ENCODE measurements at regions of chr3 and their contacts with region 1.

Region 1: GRCh38 chr3:44036850-44037249 is 204.8 kb upstream of the TOPAZ1 start:
- DNase-seq: peak in 5 of 10 donors; percentile 44 to 71 (median 66)
- H3K4me3 ChIP-seq: no peak overlapping the region
- H3K27ac ChIP-seq: peak overlapping the region in 2 of 59 donors; percentile 45 to 55
- H3K27me3 ChIP-seq: peaks cover 0 to 12% (median 0%) of the 10 kb centered on the region in 45 donors
- CTCF ChIP-seq: no peak

Region 2: DNA sequence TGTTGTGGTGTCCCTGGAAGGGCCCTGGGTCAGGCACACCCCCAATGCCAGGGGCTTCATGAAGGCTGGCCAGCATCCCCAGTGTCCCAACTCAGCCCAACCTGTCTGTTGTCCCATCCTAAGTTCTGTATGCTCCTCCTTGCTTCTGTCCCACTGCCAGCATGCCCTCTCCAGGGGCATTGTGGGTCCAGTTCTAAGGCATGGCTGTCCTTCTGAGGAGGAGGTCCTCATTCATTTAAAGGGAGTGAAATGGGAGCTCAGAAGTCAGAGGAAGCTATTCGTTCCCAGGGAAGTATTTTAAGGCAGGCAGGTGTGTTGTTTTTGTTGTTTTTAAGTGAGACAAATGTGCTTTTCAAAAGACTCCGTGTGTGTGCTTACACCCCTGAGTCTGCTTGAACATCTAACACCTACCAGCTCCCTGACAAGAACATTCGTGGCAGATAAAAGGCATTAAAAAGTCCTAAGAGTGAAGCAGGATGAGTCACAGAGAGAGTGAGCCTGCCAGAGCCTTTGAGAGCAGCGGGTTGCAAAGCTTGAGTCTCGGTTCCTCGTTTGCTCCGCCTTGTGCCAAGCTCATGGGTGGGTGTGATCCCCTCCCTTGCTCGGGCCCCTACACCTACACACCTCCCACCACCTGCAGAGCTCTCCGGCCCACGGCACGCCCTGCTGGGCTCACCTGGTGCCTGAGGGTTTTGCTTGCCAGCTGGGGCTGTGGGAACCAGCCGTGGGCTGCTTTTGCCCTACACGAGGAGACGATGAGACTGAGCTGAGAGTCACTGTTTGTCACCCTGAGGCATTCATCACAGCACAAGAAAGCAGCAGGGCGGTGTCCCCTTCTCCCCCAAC is 21.4 kb after region 1 on chr3:
- intact Hi-C with region 1: loop called in 1 of 2 experiments (anchors 1 kb)
- DNase-seq: peak in 7 of 10 donors; percentile 42 to 66 (median 53)
- H3K4me3 ChIP-seq: peak overlapping the region in 1 of 59 donors; percentile 28
- H3K27ac ChIP-seq: peak overlapping the region in 30 of 59 donors; percentile 2 to 76 (median 52)
- H3K27me3 ChIP-seq: peaks cover 0 to 13% (median 0%) of the 10 kb centered on the region in 45 donors
- CTCF ChIP-seq: no peak

Region 3: DNA sequence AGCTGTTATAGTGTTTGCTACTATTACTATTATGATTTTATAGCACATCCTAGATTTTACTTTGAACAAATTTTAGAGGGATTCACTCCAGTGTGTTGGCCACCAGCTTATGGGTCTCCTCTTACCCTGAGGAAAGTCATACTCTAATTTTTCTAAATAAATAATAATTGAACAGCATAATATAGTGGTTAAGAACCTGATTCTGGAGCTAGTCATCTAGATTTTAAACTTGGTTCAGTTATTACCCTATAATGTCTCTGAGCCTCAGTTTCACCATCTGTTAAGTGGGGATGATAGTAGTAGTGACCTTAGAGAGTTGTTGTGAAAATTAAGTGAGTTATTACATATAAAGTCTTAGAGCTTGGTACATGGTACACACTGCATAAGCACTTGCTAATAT is 174.1 kb after region 1 on chr3:
- intact Hi-C with region 1: no loop called
- DNase-seq: no peak
- H3K4me3 ChIP-seq: no peak overlapping the region
- H3K27ac ChIP-seq: no peak overlapping the region
- H3K27me3 ChIP-seq: peaks cover 0 to 6% (median 0%) of the 10 kb centered on the region in 45 donors
- CTCF ChIP-seq: no peak